Gastrocnemius medialis (tissue), 4 donors: ENCODE measurements at regions of chr6 and their contacts with region 1.

Region 1: DNA sequence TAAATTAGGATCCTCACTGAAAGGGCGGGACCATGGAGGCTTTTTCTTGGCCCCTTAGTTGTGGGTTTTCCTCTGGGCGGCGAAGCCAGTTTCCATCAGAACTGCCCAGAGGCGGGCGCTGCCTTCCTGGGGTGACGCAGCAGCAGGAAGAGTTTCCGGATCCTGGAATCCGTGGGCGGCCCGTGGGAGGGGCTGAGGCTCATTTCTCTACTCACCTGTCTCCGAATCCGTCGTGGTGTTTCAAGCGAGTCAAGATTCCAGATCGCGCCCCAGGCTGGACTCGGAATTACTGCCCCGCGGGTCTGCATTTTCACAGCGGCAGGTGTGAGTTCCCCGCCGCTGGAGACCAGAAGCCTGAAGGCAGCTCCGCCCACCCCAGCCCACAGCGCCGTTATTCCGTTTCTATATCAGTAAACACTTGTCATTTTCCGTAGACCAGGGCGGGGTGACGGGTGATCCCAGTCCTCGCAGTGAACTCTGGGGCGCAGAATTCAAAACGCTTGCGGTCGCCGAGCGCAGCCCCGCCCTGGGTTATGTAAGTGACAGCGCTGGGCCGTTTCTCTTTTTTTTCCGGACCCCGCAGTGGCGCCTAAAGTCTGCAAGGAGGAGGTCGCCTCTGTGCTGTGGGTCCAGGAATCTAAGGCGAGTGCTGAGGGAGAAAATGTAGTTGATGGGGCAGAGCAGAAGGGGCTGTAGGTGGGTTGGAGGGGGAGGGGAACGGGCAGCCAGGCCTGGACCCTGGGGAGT is 27.2 kb upstream of the POU5F1 start:
- DNase-seq: peak; percentile 82 to 91
- ATAC-seq: peak; percentile 89 to 92
- H3K4me3 ChIP-seq: peak overlapping the region; percentile 57 to 85 (median 74)
- H3K27ac ChIP-seq: peak overlapping the region; percentile 90 to 93 (median 92)
- H3K4me1 ChIP-seq: peaks cover under 1 to 20% of the 10 kb centered on the region in 2 donors
- H3K27me3 ChIP-seq: no peaks in the 10 kb centered on the region
- CTCF ChIP-seq: no peak
- POLR2A ChIP-seq: peak; percentile 81 to 86

Region 2: GRCh38 chr6:30686908-30687658 is 510.6 kb before region 1 on chr6:
- in situ Hi-C with region 1: no loop called
- intact Hi-C with region 1: loop called (anchors 5 kb)
- DNase-seq: peak; percentile 89 to 94
- ATAC-seq: peak; percentile 47 to 60
- H3K4me3 ChIP-seq: peak overlapping the region; percentile 67 to 97 (median 96)
- H3K27ac ChIP-seq: peak overlapping the region; percentile 93 to 99 (median 97)
- H3K4me1 ChIP-seq: peaks cover 39 to 40% of the 10 kb centered on the region in 2 donors
- H3K27me3 ChIP-seq: peaks cover 0 to 2% (median 0%) of the 10 kb centered on the region in 3 donors
- CTCF ChIP-seq: no peak
- POLR2A ChIP-seq: peak; percentile 66 to 70

Region 3: DNA sequence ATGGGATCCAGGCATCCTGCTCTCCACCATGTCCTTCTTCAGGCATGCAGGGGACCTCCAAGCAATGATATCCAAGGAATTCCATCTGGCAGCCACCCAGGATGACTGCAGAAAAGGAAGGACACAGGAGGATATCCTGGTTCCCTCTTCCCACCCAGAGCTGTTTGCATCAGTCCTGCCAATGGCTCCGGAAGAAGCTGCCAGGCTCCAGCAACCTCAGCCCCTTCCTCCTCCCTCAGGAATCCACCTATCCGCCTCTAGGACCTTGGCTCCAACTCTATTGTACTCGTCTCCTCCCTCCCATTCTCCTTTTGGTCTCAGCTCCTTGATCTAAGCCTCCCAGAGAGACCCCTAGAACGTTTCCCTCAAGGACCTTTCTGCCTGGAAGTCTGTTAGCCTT is 58.1 kb before region 1 on chr6:
- in situ Hi-C with region 1: loop called in 2 of 4 experiments (anchors 5 to 10 kb)
- intact Hi-C with region 1: loop called (anchors 1 kb)
- DNase-seq: no peak
- ATAC-seq: no peak
- H3K4me3 ChIP-seq: no peak overlapping the region
- H3K27ac ChIP-seq: no peak overlapping the region
- H3K4me1 ChIP-seq: no peaks in the 10 kb centered on the region
- H3K27me3 ChIP-seq: no peaks in the 10 kb centered on the region
- CTCF ChIP-seq: no peak
- POLR2A ChIP-seq: no peak

Region 4: GRCh38 chr6:31158140-31158862 is 39.4 kb before region 1 on chr6 and contains the start of gene TCF19:
- in situ Hi-C with region 1: no loop called
- intact Hi-C with region 1: loop called (anchors 1 kb)
- DNase-seq: peak; percentile 98 to 99
- ATAC-seq: peak; percentile 98
- H3K4me3 ChIP-seq: peak within 1 kb of the TSS; percentile 60 to 86 (median 78)
- H3K27ac ChIP-seq: peak within 1 kb of the TSS; percentile 82 to 89 (median 86)
- H3K4me1 ChIP-seq: peaks cover 20 to 26% of the 10 kb centered on the region in 2 donors
- H3K27me3 ChIP-seq: no peaks in the 10 kb centered on the region
- CTCF ChIP-seq: no peak
- POLR2A ChIP-seq: peak; percentile 37 to 54
- total RNA-seq, gene TCF19: 1.5 to 5.1 (median 2.6) TPM

Region 5: GRCh38 chr6:31366693-31367470 is 169.2 kb after region 1 on chr6:
- in situ Hi-C with region 1: loop called (anchors 5 to 10 kb)
- intact Hi-C with region 1: loop called (anchors 1 kb)
- DNase-seq: peak; percentile 48 to 74
- ATAC-seq: peak; percentile 98 to 99
- H3K4me3 ChIP-seq: peak overlapping the region in 3 of 4 donors; percentile 35 to 49 (median 37)
- H3K27ac ChIP-seq: no peak overlapping the region
- H3K4me1 ChIP-seq: no peaks in the 10 kb centered on the region
- H3K27me3 ChIP-seq: peaks cover 0 to 7% (median 4%) of the 10 kb centered on the region in 3 donors
- CTCF ChIP-seq: peak; percentile 81 to 94 (median 94)
- POLR2A ChIP-seq: no peak